ENCODE measurements at regions of chr13 and their contacts with region 1.

Region 1: DNA sequence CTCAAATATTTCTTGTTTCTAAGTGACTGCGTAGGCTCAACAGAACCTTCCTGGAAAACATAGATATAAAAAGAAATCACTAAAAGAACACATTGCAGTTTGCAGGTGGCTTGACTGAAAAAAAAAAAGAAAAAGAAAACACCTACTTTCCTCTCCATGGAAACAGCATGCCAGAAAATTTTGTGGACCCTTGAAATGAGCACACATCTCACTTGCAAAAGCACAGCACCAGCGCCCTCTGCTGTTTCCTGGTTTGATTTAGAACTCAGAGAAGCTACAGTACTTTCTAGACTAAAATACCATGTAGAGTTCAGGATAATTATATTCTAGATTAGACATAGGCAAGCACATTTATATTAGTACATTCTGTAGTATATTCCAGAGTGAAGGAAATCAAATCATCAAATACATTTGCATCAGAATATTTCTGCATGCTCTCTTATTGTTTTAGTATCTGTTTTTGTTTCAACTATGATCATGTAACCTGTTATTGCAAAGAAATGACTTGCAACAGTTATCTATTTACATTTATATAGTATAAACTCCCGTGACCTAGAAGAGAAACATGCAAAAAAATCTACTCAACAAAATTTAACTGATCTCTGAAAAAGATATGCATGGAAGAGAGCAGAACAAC is 22.3 kb upstream of the XPO4 start:
- DNase-seq: peak; percentile 82
- ATAC-seq: peak; percentile 66
- H3K4me3 ChIP-seq: no peak overlapping the region
- H3K27ac ChIP-seq: no peak overlapping the region
- H3K4me1 ChIP-seq: peaks cover 31% of the 10 kb centered on the region
- H3K27me3 ChIP-seq: no peaks in the 10 kb centered on the region
- CTCF ChIP-seq: peak; percentile 79
- EP300 ChIP-seq: no peak
- POLR2A ChIP-seq: no peak
- RAD21 ChIP-seq: peak; percentile 42; the same call in 1 of the 2 replicates

Region 2: DNA sequence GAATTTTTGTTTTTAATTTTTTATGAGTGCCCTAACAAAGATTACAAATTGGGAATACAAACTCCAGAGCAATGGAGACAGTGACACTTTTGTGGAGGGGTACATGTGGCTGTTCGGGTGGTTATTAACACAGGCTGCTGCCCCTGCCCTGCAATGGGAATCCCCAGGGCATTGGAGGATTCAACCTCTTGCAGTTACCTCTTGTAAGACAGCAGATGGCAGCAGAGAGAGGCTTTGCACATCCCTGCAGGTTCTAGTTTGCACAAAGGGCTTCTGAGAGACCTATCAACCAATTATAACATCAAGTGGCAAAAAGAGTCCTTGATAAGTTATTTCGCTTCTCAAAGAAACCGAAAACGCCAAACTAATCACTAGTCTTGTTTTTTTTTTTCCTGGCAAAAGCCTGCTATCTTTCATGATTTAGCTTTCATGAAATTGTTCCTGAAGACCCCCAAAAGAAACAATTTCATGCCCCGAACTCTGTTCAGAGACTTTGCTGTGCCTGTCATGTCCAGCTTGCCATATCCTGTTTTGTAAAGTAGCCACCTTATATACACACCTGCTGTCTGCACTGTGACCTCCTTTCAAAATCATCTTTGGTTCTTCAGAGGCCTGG is 742.5 kb before region 1 on chr13:
- CTCF ChIA-PET with region 1: no interaction called
- POLR2A ChIA-PET with region 1: no interaction called
- in situ Hi-C with region 1: loop called (anchors 10 kb)
- intact Hi-C with region 1: loop called (anchors 5 kb)
- DNase-seq: peak; percentile 63
- ATAC-seq: peak; percentile 95
- H3K4me3 ChIP-seq: no peak overlapping the region
- H3K27ac ChIP-seq: no peak overlapping the region
- H3K4me1 ChIP-seq: no peaks in the 10 kb centered on the region
- H3K27me3 ChIP-seq: peaks cover 2 to 9% of the 10 kb centered on the region in 2 experiments; a peak in 2 of 5 replicates
- CTCF ChIP-seq: peak; percentile 82
- EP300 ChIP-seq: no peak
- POLR2A ChIP-seq: no peak
- RAD21 ChIP-seq: peak; percentile 50; the same call in 1 of the 2 replicates

Region 3: GRCh38 chr13:20495082-20496023 is 429.5 kb before region 1 on chr13:
- CTCF ChIA-PET with region 1: interaction called, 10 read pairs
- POLR2A ChIA-PET with region 1: no interaction called
- in situ Hi-C with region 1: loop called (anchors 5 kb)
- intact Hi-C with region 1: loop called (anchors 1 kb)
- DNase-seq: peak; percentile 66
- ATAC-seq: peak; percentile 70
- H3K4me3 ChIP-seq: peak overlapping the region in 2 of 3 experiments; percentile 32 to 34; a peak in 3 of 6 replicates
- H3K27ac ChIP-seq: peak overlapping the region; percentile 73
- H3K4me1 ChIP-seq: peaks cover 45% of the 10 kb centered on the region
- H3K27me3 ChIP-seq: no peaks in the 10 kb centered on the region
- CTCF ChIP-seq: peak; percentile 84
- EP300 ChIP-seq: peak in 1 of 2 experiments; percentile 15; a peak in 1 of 4 replicates
- POLR2A ChIP-seq: 0 out of 4 replicates have a peak, but pooled peaks of 1 of the 2 experiments have one; percentile 19
- RAD21 ChIP-seq: peak; percentile 77

Region 4: GRCh38 chr13:20713751-20714150 is 211.1 kb before region 1 on chr13:
- CTCF ChIA-PET with region 1: interaction called, 8 read pairs
- POLR2A ChIA-PET with region 1: no interaction called
- in situ Hi-C with region 1: loop called (anchors 10 kb)
- intact Hi-C with region 1: loop called (anchors 2 kb)
- DNase-seq: no peak
- ATAC-seq: peak; percentile 5; the same call in 1 of the 3 replicates
- H3K4me3 ChIP-seq: peak overlapping the region in 2 of 3 experiments; percentile 22 to 61; a peak in 3 of 6 replicates
- H3K27ac ChIP-seq: no peak overlapping the region
- H3K4me1 ChIP-seq: peaks cover 57% of the 10 kb centered on the region
- H3K27me3 ChIP-seq: no peaks in the 10 kb centered on the region; a peak in 1 of 5 replicates
- CTCF ChIP-seq: no peak
- EP300 ChIP-seq: no peak
- POLR2A ChIP-seq: no peak
- RAD21 ChIP-seq: no peak

Region 5: GRCh38 chr13:20773194-20774080 is 151.4 kb before region 1 on chr13 and contains the start of gene EEF1AKMT1:
- CTCF ChIA-PET with region 1: no interaction called
- POLR2A ChIA-PET with region 1: no interaction called
- in situ Hi-C with region 1: no loop called
- intact Hi-C with region 1: no loop called
- DNase-seq: peak; percentile 81
- ATAC-seq: peak; percentile 94
- H3K4me3 ChIP-seq: peak within 1 kb of the TSS; percentile 70 to 86 (median 74)
- H3K27ac ChIP-seq: peak within 1 kb of the TSS; percentile 98
- H3K4me1 ChIP-seq: peaks cover 41% of the 10 kb centered on the region
- H3K27me3 ChIP-seq: no peaks in the 10 kb centered on the region
- CTCF ChIP-seq: peak; percentile 13; the same call in 1 of the 2 replicates
- EP300 ChIP-seq: no peak
- POLR2A ChIP-seq: peak; percentile 93 to 95
- RAD21 ChIP-seq: 0 out of 2 replicates have a peak, but pooled peaks have one; percentile 48
- total RNA-seq, gene EEF1AKMT1: 16.1 and 23.5 TPM in 2 replicates

Region 6: GRCh38 chr13:20869542-20869941 is 55.3 kb before region 1 on chr13:
- CTCF ChIA-PET with region 1: no interaction called
- POLR2A ChIA-PET with region 1: no interaction called
- in situ Hi-C with region 1: no loop called
- intact Hi-C with region 1: loop called (anchors 10 kb)
- DNase-seq: no peak
- ATAC-seq: no peak
- H3K4me3 ChIP-seq: no peak overlapping the region
- H3K27ac ChIP-seq: no peak overlapping the region
- H3K4me1 ChIP-seq: peaks cover 19% of the 10 kb centered on the region
- H3K27me3 ChIP-seq: no peaks in the 10 kb centered on the region
- CTCF ChIP-seq: no peak
- EP300 ChIP-seq: no peak
- POLR2A ChIP-seq: no peak
- RAD21 ChIP-seq: no peak

Region 7: DNA sequence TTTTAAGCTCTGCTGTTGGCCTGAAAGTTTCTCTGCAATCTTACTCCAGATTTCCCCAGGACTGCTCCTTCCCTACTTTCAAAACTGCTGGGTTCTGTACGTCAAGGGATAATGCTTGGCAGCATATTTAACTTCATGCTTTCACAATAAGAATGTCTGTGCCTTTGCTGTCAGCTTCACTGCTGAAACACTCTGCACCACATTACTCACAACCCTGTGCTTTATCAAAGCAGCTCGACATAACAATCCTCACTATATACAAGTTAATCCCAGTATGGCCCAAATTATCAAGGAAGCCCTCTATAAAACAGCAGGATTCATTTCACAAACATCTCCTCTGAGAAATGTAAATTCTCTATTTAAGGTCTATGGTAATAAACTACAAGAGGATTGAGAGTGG is 119.0 kb after region 1 on chr13:
- CTCF ChIA-PET with region 1: no interaction called
- POLR2A ChIA-PET with region 1: no interaction called
- in situ Hi-C with region 1: no loop called
- intact Hi-C with region 1: no loop called
- DNase-seq: no peak
- ATAC-seq: no peak
- H3K4me3 ChIP-seq: no peak overlapping the region
- H3K27ac ChIP-seq: no peak overlapping the region
- H3K4me1 ChIP-seq: peaks cover 22% of the 10 kb centered on the region
- H3K27me3 ChIP-seq: no peaks in the 10 kb centered on the region
- CTCF ChIP-seq: no peak
- EP300 ChIP-seq: no peak
- POLR2A ChIP-seq: no peak
- RAD21 ChIP-seq: no peak

Region 8: DNA sequence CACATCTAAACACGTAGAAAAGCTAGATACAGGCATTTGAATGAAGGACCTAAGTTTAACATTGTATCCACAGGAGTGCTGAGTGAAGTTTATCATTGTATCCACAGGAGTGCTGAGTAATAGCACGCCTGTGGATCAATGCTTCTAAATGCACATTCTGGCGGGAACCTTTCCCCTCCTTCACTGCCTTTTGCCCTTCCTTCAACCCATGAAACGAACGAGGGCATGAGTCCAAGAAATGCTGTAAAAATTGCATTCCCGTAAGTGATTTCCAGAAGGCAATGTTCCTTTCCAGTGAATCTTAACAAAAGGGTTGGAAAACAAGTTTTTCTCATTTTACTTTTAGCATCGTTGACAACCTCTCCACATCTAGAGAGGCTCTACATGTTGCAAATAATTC is 446.1 kb after region 1 on chr13:
- CTCF ChIA-PET with region 1: no interaction called
- POLR2A ChIA-PET with region 1: no interaction called
- in situ Hi-C with region 1: no loop called
- intact Hi-C with region 1: no loop called
- DNase-seq: no peak
- ATAC-seq: no peak
- H3K4me3 ChIP-seq: no peak overlapping the region
- H3K27ac ChIP-seq: no peak overlapping the region
- H3K4me1 ChIP-seq: no peaks in the 10 kb centered on the region
- H3K27me3 ChIP-seq: no peaks in the 10 kb centered on the region; a peak in 1 of 5 replicates
- CTCF ChIP-seq: no peak
- EP300 ChIP-seq: no peak
- POLR2A ChIP-seq: no peak
- RAD21 ChIP-seq: no peak